Activated CD4-positive, alpha-beta memory T cell treated with anti-CD3 and anti-CD28 coated beads, Interleukin-2, amount 10 ng/mL, durations not matched to agents 7 days and 5 days (primary cell): ENCODE measurements at regions of chr12 and their contacts with region 1.

Region 1: DNA sequence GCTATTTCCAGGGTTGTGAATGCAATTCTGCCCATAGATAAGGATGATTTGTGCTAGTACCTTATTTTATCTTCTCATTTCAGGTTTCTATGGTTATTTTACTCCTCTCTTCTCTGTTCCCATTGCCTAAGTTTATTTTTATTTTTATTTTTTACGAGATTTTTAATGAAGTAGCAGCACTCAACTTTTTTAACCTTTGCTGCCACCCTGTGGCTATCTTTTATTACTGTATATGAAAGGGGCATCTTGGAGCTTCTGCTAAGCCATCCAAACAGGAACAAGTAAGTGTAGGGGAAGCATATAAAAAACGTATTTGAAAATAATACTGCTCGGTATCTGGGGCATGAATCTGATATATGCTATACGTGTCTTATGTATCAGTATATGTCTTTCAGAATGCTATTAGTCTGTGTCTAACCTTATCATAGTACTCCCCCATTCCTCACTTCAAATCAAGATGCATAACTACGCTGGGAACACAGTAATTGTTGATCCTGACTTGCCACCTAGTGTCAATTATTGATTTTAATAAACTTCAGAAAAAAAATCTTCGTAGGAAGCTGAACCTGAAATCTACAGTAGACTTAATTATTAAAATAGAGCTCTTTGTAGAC is 60.3 kb downstream of the KLRG1 start:
- DNase-seq: no peak
- H3K4me3 Mint-ChIP-seq: no peak overlapping the region
- H3K27ac Mint-ChIP-seq: no peak overlapping the region
- H3K4me1 Mint-ChIP-seq: peaks cover 16% of the 10 kb centered on the region
- H3K27me3 Mint-ChIP-seq: no peaks in the 10 kb centered on the region

Region 2: GRCh38 chr12:8544295-8544694 is 505.3 kb before region 1 on chr12:
- CTCF ChIA-PET with region 1: interaction called, 16 read pairs
- POLR2A ChIA-PET with region 1: no interaction called
- DNase-seq: peak; percentile 76
- H3K4me3 Mint-ChIP-seq: no peak overlapping the region
- H3K27ac Mint-ChIP-seq: no peak overlapping the region
- H3K4me1 Mint-ChIP-seq: peaks cover 4% of the 10 kb centered on the region
- H3K27me3 Mint-ChIP-seq: peaks cover 31% of the 10 kb centered on the region

Region 3: DNA sequence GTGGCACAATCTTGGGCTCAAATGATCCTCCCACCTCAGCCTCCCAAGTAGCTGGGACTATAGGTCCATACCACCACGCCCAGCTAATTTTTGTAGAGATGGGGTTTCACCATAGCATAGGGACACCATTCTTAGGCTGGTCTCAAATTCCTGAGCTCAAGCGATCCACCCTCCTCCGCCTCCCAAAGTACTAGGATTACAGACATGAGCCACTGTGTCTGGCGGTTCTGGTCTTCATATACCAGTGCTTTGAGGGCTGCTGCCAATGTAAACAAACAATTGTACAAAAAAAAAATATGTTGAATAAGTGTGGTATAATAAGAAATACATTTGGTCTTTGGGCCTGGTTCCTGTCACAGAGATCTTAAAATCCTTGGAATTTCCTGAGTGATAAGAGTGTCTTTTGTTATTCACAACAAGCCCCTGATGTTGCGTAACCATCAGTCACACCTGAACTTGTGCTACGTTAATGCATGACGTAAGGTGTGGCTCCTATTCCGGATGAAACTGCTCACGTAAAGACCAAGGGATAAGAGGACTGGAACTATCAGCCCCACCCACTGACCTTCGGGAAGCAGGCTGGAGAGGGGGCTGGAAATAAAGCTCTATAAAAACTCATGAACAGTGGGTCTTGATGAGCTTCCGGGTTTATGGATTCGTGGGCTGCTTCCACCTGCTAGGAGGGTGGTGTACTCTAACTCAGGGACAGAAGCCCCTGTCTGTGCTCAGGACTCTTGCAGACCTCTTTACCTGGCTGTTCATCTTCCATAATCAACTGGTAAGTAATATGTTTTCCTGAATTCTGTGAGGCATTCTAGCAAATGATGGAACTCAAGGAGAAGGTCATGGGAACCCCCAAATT is 368.4 kb before region 1 on chr12:
- CTCF ChIA-PET with region 1: interaction called, 15 read pairs
- POLR2A ChIA-PET with region 1: no interaction called
- DNase-seq: no peak
- H3K4me3 Mint-ChIP-seq: no peak overlapping the region
- H3K27ac Mint-ChIP-seq: no peak overlapping the region
- H3K4me1 Mint-ChIP-seq: no peaks in the 10 kb centered on the region
- H3K27me3 Mint-ChIP-seq: peaks cover 18% of the 10 kb centered on the region

Region 4: GRCh38 chr12:8914716-8915526 is 134.7 kb before region 1 on chr12:
- CTCF ChIA-PET with region 1: interaction called, 12 read pairs
- POLR2A ChIA-PET with region 1: no interaction called
- DNase-seq: peak; percentile 63
- H3K4me3 Mint-ChIP-seq: no peak overlapping the region
- H3K27ac Mint-ChIP-seq: no peak overlapping the region
- H3K4me1 Mint-ChIP-seq: peaks cover 10% of the 10 kb centered on the region
- H3K27me3 Mint-ChIP-seq: peaks cover 9% of the 10 kb centered on the region

Region 5: GRCh38 chr12:8949342-8950220 is 100.0 kb before region 1 on chr12 and contains the start of gene M6PR:
- CTCF ChIA-PET with region 1: interaction called, 82 read pairs
- POLR2A ChIA-PET with region 1: interaction called, 24 read pairs
- DNase-seq: peak; percentile 94
- H3K4me3 Mint-ChIP-seq: peak within 1 kb of the TSS; percentile 99
- H3K27ac Mint-ChIP-seq: peak within 1 kb of the TSS; percentile 87
- H3K4me1 Mint-ChIP-seq: peaks cover 65% of the 10 kb centered on the region
- H3K27me3 Mint-ChIP-seq: no peaks in the 10 kb centered on the region
- total RNA-seq, gene M6PR: 210 to 211 TPM

Region 6: GRCh38 chr12:9064201-9064814 is 14.7 kb after region 1 on chr12:
- CTCF ChIA-PET with region 1: interaction called, 14 read pairs
- POLR2A ChIA-PET with region 1: no interaction called
- DNase-seq: peak; percentile 52
- H3K4me3 Mint-ChIP-seq: peak overlapping the region; percentile 76
- H3K27ac Mint-ChIP-seq: no peak overlapping the region
- H3K4me1 Mint-ChIP-seq: peaks cover 3% of the 10 kb centered on the region
- H3K27me3 Mint-ChIP-seq: peaks cover 5% of the 10 kb centered on the region

Region 7: GRCh38 chr12:9114946-9115345 is 65.3 kb after region 1 on chr12:
- CTCF ChIA-PET with region 1: no interaction called
- POLR2A ChIA-PET with region 1: no interaction called
- DNase-seq: no peak
- H3K4me3 Mint-ChIP-seq: no peak overlapping the region
- H3K27ac Mint-ChIP-seq: no peak overlapping the region
- H3K4me1 Mint-ChIP-seq: peaks cover 8% of the 10 kb centered on the region
- H3K27me3 Mint-ChIP-seq: no peaks in the 10 kb centered on the region

Region 8: GRCh38 chr12:9256341-9256740 is 206.7 kb after region 1 on chr12:
- CTCF ChIA-PET with region 1: no interaction called
- POLR2A ChIA-PET with region 1: no interaction called
- DNase-seq: no peak
- H3K4me3 Mint-ChIP-seq: no peak overlapping the region
- H3K27ac Mint-ChIP-seq: no peak overlapping the region
- H3K4me1 Mint-ChIP-seq: peaks cover 8% of the 10 kb centered on the region
- H3K27me3 Mint-ChIP-seq: peaks cover 5% of the 10 kb centered on the region

Region 9: GRCh38 chr12:9651265-9651729 is 601.7 kb after region 1 on chr12:
- CTCF ChIA-PET with region 1: no interaction called
- POLR2A ChIA-PET with region 1: no interaction called
- DNase-seq: peak; percentile 82
- H3K4me3 Mint-ChIP-seq: peak overlapping the region; percentile 95
- H3K27ac Mint-ChIP-seq: peak overlapping the region; percentile 94
- H3K4me1 Mint-ChIP-seq: peaks cover 57% of the 10 kb centered on the region
- H3K27me3 Mint-ChIP-seq: no peaks in the 10 kb centered on the region